Activated B cell treated with CpG ODN at 0.5 μM for 24 hours (primary cell): ENCODE measurements at regions of chr5 and their contacts with region 1.

Region 1: GRCh38 chr5:36397901-36398536 is 96.3 kb upstream of the RANBP3L start:
- DNase-seq: no peak
- ATAC-seq: no peak
- H3K4me3 Mint-ChIP-seq: no peak overlapping the region
- H3K27ac Mint-ChIP-seq: no peak overlapping the region
- H3K4me1 Mint-ChIP-seq: peaks cover 26% of the 10 kb centered on the region
- H3K27me3 Mint-ChIP-seq: no peaks in the 10 kb centered on the region
- CTCF ChIP-seq: no peak

Region 2: DNA sequence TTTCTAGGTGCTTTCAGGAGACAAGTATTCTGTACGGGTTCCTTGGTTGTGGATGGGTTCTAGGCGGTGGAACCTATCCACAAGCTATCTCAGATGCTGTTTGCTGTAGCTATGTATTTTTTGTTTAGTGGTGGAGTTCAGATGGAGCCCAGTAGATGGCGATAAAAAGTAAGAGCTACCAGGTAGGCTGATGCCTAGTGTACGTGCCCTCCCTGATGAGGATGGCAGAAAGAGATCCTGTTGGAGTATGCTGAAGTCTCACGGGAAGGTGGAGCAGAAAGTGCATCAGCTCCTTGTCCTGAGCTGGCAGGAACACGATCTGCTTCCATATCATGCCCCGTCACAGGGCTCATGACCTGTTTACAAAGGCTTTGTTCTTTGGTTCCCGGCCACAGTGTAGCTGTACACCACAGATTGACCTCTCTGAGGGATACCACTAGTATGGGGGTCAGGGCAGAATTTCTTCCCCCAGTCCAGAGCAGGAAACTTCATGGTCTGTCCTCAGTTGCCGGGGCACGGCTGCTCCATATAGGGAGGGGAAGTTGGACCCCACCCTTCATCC is 318.7 kb before region 1 on chr5:
- CTCF ChIA-PET with region 1: no interaction called
- POLR2A ChIA-PET with region 1: no interaction called
- intact Hi-C with region 1: loop called (anchors 10 kb)
- DNase-seq: no peak
- ATAC-seq: peak; percentile 73
- H3K4me3 Mint-ChIP-seq: no peak overlapping the region
- H3K27ac Mint-ChIP-seq: no peak overlapping the region
- H3K4me1 Mint-ChIP-seq: no peaks in the 10 kb centered on the region
- H3K27me3 Mint-ChIP-seq: peaks cover 16% of the 10 kb centered on the region
- CTCF ChIP-seq: no peak

Region 3: DNA sequence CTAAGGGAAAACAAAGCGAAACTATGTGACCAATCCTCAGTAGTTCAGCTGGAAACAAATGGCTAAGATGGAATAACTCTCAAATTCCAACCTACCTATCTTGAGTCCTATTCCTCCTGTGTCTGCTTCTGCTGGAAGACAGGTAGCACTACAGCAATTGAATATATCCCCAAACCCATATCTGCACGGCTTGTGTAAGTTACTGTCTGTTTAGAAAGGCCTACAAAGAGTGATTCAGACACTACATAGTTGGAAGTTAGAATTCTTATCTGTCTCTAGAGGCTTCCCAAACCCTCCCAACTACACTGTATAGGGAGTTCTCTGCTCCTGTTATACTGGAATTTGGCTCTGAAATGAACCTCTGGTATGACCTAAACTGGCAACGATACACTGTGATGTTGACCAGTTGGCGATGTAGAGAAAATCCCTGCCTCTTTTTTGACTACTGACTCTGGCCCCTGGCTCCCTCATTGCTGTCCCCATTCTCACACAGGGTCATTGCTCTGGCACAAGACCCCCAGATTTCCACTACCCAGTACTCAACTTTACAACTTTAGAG is 133.7 kb before region 1 on chr5:
- CTCF ChIA-PET with region 1: interaction called, 3 read pairs
- POLR2A ChIA-PET with region 1: no interaction called
- intact Hi-C with region 1: loop called (anchors 2 kb)
- DNase-seq: no peak
- ATAC-seq: no peak
- H3K4me3 Mint-ChIP-seq: no peak overlapping the region
- H3K27ac Mint-ChIP-seq: no peak overlapping the region
- H3K4me1 Mint-ChIP-seq: no peaks in the 10 kb centered on the region
- H3K27me3 Mint-ChIP-seq: peaks cover 5% of the 10 kb centered on the region
- CTCF ChIP-seq: no peak

Region 4: DNA sequence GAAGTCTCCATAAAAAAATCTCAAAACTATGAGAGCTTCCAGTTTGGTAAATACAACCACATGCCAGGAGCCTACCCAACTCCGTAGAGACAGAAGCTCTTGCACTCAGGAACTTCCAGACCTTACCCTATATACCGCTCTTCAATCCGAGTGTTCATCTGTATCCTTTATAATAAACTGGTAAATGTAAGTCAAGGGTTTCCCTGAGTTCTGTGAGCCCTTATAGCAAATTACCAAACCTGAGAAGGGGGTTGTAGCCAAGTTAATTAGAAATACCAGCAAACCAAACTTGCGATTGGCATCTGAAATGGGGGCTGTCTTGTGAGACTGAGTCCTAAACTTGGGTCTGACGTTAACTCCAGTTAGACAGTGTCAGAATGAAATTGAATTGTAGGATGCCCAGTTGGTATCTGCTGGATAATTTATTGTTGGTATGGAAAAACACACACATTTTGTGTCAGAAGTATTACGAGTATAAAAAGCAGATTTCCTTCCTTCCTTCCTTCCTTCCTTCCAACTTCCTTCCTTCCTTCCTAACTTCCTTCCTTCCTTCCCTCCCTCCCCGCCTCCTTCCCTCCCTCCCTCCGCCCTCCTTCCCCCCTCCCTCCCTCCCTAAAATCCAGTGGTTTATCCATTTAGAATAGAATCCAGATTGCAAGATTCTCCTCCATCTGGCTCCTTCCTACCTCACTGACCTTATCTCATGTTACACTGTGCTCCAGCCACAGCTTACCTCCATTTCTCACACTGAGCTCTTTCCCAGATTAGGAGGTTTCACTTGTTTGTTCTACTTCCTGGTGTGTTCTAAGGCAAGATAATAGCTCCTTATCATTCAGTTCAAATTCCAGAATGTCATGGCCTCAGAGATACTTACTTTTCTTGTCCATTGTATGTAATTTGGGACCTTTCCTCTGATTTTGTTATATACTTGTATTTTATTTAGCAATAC is 1177.8 kb after region 1 on chr5:
- CTCF ChIA-PET with region 1: no interaction called
- POLR2A ChIA-PET with region 1: no interaction called
- intact Hi-C with region 1: no loop called
- DNase-seq: no peak
- ATAC-seq: no peak
- H3K4me3 Mint-ChIP-seq: no peak overlapping the region
- H3K27ac Mint-ChIP-seq: no peak overlapping the region
- H3K4me1 Mint-ChIP-seq: peaks cover 4% of the 10 kb centered on the region
- H3K27me3 Mint-ChIP-seq: no peaks in the 10 kb centered on the region
- CTCF ChIP-seq: no peak